Activated CD4-positive, alpha-beta T cell treated with anti-CD3 and anti-CD28 coated beads for 36 hours (primary cell): ENCODE measurements at regions of chr3 and their contacts with region 1.

Region 1: GRCh38 chr3:68893600-68894239 is 38.6 kb downstream of the TAFA4 start:
- DNase-seq: no peak
- ATAC-seq: no peak
- H3K4me3 Mint-ChIP-seq: no peak overlapping the region
- H3K27ac Mint-ChIP-seq: no peak overlapping the region
- H3K4me1 Mint-ChIP-seq: no peaks in the 10 kb centered on the region
- H3K27me3 Mint-ChIP-seq: peaks cover under 1% of the 10 kb centered on the region

Region 2: GRCh38 chr3:66938338-66938963 is 1955.3 kb before region 1 on chr3:
- CTCF ChIA-PET with region 1: interaction called, 13 read pairs
- POLR2A ChIA-PET with region 1: no interaction called
- intact Hi-C with region 1: no loop called
- DNase-seq: peak; percentile 40
- ATAC-seq: peak; percentile 44
- H3K4me3 Mint-ChIP-seq: no peak overlapping the region
- H3K27ac Mint-ChIP-seq: no peak overlapping the region
- H3K4me1 Mint-ChIP-seq: no peaks in the 10 kb centered on the region
- H3K27me3 Mint-ChIP-seq: peaks cover 18% of the 10 kb centered on the region

Region 3: DNA sequence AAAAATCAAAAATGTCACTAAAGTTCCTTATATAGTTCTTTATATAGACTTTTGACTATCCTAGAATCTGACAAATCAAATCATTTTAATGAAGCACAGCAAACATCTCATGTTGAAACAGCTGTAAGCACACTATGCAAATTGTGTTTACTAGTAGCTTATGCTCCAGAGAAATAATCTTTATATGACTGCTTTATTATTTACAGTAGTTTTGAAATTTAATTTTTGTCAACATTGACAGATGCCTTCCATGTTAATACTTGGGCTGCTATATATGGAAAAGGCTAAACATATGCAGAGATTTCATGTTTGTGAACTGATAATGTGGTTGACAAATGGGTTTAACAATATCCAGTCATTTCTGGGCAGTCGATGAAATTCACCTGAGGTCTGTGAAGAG is 578.2 kb before region 1 on chr3:
- CTCF ChIA-PET with region 1: no interaction called
- POLR2A ChIA-PET with region 1: no interaction called
- intact Hi-C with region 1: no loop called
- DNase-seq: no peak
- ATAC-seq: no peak
- H3K4me3 Mint-ChIP-seq: no peak overlapping the region
- H3K27ac Mint-ChIP-seq: no peak overlapping the region
- H3K4me1 Mint-ChIP-seq: no peaks in the 10 kb centered on the region
- H3K27me3 Mint-ChIP-seq: no peaks in the 10 kb centered on the region

Region 4: GRCh38 chr3:68972358-68972979 is 78.7 kb after region 1 on chr3:
- CTCF ChIA-PET with region 1: interaction called, 3 read pairs
- POLR2A ChIA-PET with region 1: no interaction called
- intact Hi-C with region 1: loop called in 1 of 2 experiments (anchors 5 kb)
- DNase-seq: peak; percentile 66
- ATAC-seq: peak; percentile 64
- H3K4me3 Mint-ChIP-seq: no peak overlapping the region
- H3K27ac Mint-ChIP-seq: no peak overlapping the region
- H3K4me1 Mint-ChIP-seq: no peaks in the 10 kb centered on the region
- H3K27me3 Mint-ChIP-seq: peaks cover 5% of the 10 kb centered on the region

Region 5: DNA sequence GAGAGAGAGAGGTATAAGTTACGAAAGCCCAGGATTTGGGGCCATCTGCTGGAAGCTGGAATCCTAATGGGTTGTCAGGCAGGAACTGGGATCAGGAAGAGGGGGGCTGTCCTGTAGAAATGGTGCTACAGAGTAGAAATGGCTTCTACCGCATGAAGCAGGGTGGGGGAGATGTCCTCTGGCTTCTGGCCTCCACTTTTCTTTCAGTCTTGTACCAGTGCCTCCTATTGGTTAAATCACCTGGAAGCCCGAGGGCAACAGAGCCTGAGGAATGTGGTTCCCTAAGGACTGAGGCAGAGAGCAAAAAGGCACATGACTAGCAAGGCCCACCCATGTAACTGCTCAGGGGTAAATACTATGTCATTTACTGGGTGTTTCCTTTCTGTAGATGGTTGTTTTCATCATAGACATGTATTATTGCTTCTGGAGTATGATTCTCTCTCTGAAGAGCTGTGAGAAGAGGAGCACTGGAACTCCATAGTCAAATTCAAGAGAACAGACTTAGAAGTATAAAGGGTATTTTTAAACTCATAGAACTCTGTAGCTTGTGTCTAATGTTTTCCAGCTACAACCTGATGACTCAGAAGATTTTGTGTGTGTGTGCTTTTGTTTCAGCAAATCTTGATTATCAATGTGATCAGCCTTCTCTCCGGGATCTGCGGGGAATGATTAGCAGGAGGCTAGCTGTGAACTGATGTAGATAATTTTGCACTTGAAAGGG is 825.3 kb after region 1 on chr3:
- CTCF ChIA-PET with region 1: no interaction called
- POLR2A ChIA-PET with region 1: no interaction called
- intact Hi-C with region 1: no loop called
- DNase-seq: no peak
- ATAC-seq: no peak
- H3K4me3 Mint-ChIP-seq: no peak overlapping the region
- H3K27ac Mint-ChIP-seq: no peak overlapping the region
- H3K4me1 Mint-ChIP-seq: no peaks in the 10 kb centered on the region
- H3K27me3 Mint-ChIP-seq: peaks cover 5% of the 10 kb centered on the region